B cell (primary cell): ENCODE measurements at regions of chr14 and their contacts with region 1.

Region 1: GRCh38 chr14:89430391-89431236 is 13.6 kb upstream of the FOXN3 start:
- DNase-seq: peak; percentile 93
- ATAC-seq: peak; percentile 92
- H3K4me3 ChIP-seq: peak overlapping the region; percentile 49 to 88 (median 64)
- H3K4me3 Mint-ChIP-seq: peak overlapping the region; percentile 86
- H3K27ac ChIP-seq: peak overlapping the region; percentile 82 to 86
- H3K27ac Mint-ChIP-seq: peak overlapping the region; percentile 86
- H3K4me1 ChIP-seq: peaks cover 69 to 76% of the 10 kb centered on the region in 2 donors
- H3K4me1 Mint-ChIP-seq: peaks cover 71% of the 10 kb centered on the region
- H3K27me3 ChIP-seq: no peaks in the 10 kb centered on the region
- H3K27me3 Mint-ChIP-seq: no peaks in the 10 kb centered on the region
- CTCF ChIP-seq: no peak

Region 2: GRCh38 chr14:89336338-89336737 is 94.3 kb before region 1 on chr14:
- CTCF ChIA-PET with region 1: interaction called, 11 read pairs
- POLR2A ChIA-PET with region 1: no interaction called
- intact Hi-C with region 1: no loop called
- DNase-seq: peak; percentile 69
- ATAC-seq: peak; percentile 69
- H3K4me3 ChIP-seq: no peak overlapping the region
- H3K4me3 Mint-ChIP-seq: no peak overlapping the region
- H3K27ac ChIP-seq: peak overlapping the region in 1 of 2 donors; percentile 31
- H3K27ac Mint-ChIP-seq: peak overlapping the region; percentile 62
- H3K4me1 ChIP-seq: peaks cover 39 to 42% of the 10 kb centered on the region in 2 donors
- H3K4me1 Mint-ChIP-seq: peaks cover 67% of the 10 kb centered on the region
- H3K27me3 ChIP-seq: no peaks in the 10 kb centered on the region
- H3K27me3 Mint-ChIP-seq: no peaks in the 10 kb centered on the region
- CTCF ChIP-seq: peak; percentile 52

Region 3: DNA sequence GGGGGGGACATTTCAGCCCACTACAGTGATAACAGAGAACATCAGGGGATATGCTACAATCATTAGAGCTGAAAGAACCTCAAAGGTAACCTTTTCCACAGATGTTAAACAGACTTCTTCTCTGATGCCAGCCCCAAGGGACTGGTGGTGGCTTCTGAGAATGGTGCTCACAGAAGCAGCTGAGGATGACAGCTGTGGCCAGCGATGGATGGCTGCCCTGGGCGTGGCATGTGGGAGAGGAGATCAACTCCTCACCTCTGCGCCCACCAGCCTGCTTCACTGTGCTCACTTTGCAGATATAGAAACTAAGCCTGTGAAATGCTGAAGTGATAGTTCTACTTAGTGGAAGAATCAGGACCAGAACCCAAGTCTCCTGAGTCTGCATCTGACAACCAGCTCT is 46.6 kb before region 1 on chr14:
- CTCF ChIA-PET with region 1: no interaction called
- POLR2A ChIA-PET with region 1: interaction called, 3 read pairs
- intact Hi-C with region 1: loop called (anchors 1 kb)
- DNase-seq: peak; percentile 95
- ATAC-seq: peak; percentile 96
- H3K4me3 ChIP-seq: peak overlapping the region in 1 of 5 experiments; percentile 35
- H3K4me3 Mint-ChIP-seq: peak overlapping the region; percentile 46
- H3K27ac ChIP-seq: peak overlapping the region; percentile 69 to 72
- H3K27ac Mint-ChIP-seq: peak overlapping the region; percentile 86
- H3K4me1 ChIP-seq: peaks cover 58 to 65% of the 10 kb centered on the region in 2 donors
- H3K4me1 Mint-ChIP-seq: peaks cover 70% of the 10 kb centered on the region
- H3K27me3 ChIP-seq: no peaks in the 10 kb centered on the region
- H3K27me3 Mint-ChIP-seq: no peaks in the 10 kb centered on the region
- CTCF ChIP-seq: no peak

Region 4: DNA sequence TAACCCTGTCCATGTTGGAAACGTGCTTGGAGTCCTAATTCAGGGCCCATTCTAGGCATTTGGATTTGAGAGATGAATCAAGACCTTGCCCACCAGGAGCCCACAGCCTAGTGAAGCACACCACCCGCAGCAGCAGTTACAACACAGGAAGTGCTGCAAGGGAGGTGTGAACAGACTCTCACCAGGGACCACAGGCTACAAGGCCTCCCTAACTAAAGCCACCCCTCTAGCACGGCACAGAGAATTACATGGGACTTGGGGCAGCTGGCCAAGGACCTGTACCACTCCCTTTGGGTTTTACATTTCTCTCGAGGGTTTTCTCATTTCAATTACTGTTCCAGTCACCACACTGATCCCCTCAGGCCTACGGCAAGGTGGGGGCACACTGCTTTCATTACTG is 35.9 kb after region 1 on chr14:
- CTCF ChIA-PET with region 1: interaction called, 3 read pairs
- POLR2A ChIA-PET with region 1: interaction called, 9 read pairs
- intact Hi-C with region 1: loop called (anchors 2 kb)
- DNase-seq: peak; percentile 32
- ATAC-seq: peak; percentile 44
- H3K4me3 ChIP-seq: no peak overlapping the region
- H3K4me3 Mint-ChIP-seq: peak overlapping the region; percentile 26
- H3K27ac ChIP-seq: peak overlapping the region; percentile 14 to 54
- H3K27ac Mint-ChIP-seq: peak overlapping the region; percentile 65
- H3K4me1 ChIP-seq: peaks cover 22 to 34% of the 10 kb centered on the region in 2 donors
- H3K4me1 Mint-ChIP-seq: peaks cover 53% of the 10 kb centered on the region
- H3K27me3 ChIP-seq: no peaks in the 10 kb centered on the region
- H3K27me3 Mint-ChIP-seq: no peaks in the 10 kb centered on the region
- CTCF ChIP-seq: no peak

Region 5: DNA sequence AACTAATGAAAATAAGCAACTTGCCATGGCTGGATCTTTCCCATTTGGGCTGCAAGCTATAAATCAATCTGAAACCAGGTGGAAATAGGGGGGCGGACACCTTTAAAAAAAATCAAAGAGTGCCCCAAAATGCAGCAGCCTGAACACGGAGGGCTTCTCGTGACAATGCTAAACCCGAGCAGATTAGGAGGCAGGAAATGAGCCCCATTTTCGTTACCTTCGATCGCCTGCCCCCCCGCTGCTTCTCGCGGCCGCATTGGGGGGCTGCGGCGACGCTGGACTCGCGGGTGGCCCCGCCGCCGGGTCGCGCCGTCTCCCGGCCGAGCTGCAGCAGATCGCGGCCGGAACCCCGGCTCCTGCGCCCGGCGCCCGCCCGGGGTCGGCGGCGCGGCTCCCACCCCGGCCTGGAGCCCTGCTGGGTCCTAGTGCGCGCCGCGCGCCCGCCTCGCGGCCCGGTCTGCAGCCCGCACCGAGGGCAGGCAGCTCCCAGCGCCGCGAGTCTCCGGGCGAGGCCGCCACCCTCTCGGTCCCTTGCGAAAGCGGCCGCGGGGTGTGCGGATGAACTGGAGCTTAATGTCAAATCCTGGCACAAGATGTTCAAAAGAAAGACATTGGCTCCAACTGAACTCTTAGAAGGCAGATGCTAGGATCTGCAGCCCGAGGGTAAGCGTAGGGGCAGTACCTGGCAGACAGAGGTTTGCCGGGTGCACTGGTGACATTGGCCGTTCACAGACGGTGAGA is 188.4 kb after region 1 on chr14:
- CTCF ChIA-PET with region 1: interaction called, 3 read pairs
- POLR2A ChIA-PET with region 1: interaction called, 3 read pairs
- intact Hi-C with region 1: loop called (anchors 1 kb)
- DNase-seq: peak; percentile 81
- ATAC-seq: peak; percentile 72
- H3K4me3 ChIP-seq: peak overlapping the region; percentile 61 to 93 (median 86)
- H3K4me3 Mint-ChIP-seq: peak overlapping the region; percentile 92
- H3K27ac ChIP-seq: peak overlapping the region in 1 of 2 donors; percentile 71
- H3K27ac Mint-ChIP-seq: peak overlapping the region; percentile 86
- H3K4me1 ChIP-seq: peaks cover 51 to 55% of the 10 kb centered on the region in 2 donors
- H3K4me1 Mint-ChIP-seq: peaks cover 66% of the 10 kb centered on the region
- H3K27me3 ChIP-seq: no peaks in the 10 kb centered on the region
- H3K27me3 Mint-ChIP-seq: no peaks in the 10 kb centered on the region
- CTCF ChIP-seq: no peak

Region 6: DNA sequence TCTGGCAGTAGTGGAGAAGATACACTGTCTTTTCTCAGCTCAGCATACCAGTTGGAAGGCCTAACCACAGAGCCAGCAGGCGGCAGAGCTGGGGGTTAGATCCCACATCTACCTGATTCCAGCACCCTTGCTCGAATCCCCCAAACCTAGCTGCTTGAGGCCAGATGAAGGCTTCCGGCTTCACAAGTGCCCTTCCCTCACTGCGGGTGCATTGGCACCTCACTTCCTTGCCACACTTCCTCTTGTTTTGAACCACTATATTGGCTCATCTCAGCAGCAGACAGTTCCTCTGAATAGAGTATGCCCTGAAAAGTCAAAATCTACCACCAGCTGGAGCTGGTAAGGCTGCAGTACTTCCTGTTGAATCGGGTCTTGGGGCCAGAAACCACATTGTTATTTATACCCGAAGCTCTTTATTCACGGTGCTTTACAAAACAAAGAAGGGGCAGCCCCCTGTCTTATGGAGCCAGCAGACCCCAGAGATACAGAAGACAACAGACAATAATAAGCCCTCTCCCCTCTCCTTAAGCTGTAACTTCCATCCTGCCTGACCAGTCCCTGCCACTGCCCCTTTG is 290.2 kb after region 1 on chr14:
- CTCF ChIA-PET with region 1: interaction called, 3 read pairs
- POLR2A ChIA-PET with region 1: interaction called, 6 read pairs
- intact Hi-C with region 1: loop called (anchors 2 kb)
- DNase-seq: peak; percentile 91
- ATAC-seq: peak; percentile 93
- H3K4me3 ChIP-seq: peak overlapping the region in 2 of 5 experiments; percentile 26 to 40
- H3K4me3 Mint-ChIP-seq: peak overlapping the region; percentile 75
- H3K27ac ChIP-seq: peak overlapping the region; percentile 93 to 95
- H3K27ac Mint-ChIP-seq: peak overlapping the region; percentile 95
- H3K4me1 ChIP-seq: peaks cover 59 to 62% of the 10 kb centered on the region in 2 donors
- H3K4me1 Mint-ChIP-seq: peaks cover 62% of the 10 kb centered on the region
- H3K27me3 ChIP-seq: no peaks in the 10 kb centered on the region
- H3K27me3 Mint-ChIP-seq: no peaks in the 10 kb centered on the region
- CTCF ChIP-seq: no peak